Caco-2 (cell line): ENCODE measurements at regions of chr6 and their contacts with region 1.

Region 1: GRCh38 chr6:47477497-47478232 is at the start of gene CD2AP:
- DNase-seq: peak; percentile 92 to 95
- H3K4me3 ChIP-seq: peak within 1 kb of the TSS; percentile 78
- H3K4me3 Mint-ChIP-seq: peak within 1 kb of the TSS; percentile 97
- H3K27ac Mint-ChIP-seq: peak within 1 kb of the TSS; percentile 93
- H3K4me1 ChIP-seq: peaks cover 14% of the 10 kb centered on the region
- H3K4me1 Mint-ChIP-seq: peaks cover 28% of the 10 kb centered on the region
- H3K27me3 ChIP-seq: no peaks in the 10 kb centered on the region
- H3K27me3 Mint-ChIP-seq: no peaks in the 10 kb centered on the region
- CTCF ChIP-seq: peak in 1 of 2 experiments; percentile 26
- total RNA-seq, gene CD2AP: 65.3 and 69.3 TPM in 2 replicates

Region 2: DNA sequence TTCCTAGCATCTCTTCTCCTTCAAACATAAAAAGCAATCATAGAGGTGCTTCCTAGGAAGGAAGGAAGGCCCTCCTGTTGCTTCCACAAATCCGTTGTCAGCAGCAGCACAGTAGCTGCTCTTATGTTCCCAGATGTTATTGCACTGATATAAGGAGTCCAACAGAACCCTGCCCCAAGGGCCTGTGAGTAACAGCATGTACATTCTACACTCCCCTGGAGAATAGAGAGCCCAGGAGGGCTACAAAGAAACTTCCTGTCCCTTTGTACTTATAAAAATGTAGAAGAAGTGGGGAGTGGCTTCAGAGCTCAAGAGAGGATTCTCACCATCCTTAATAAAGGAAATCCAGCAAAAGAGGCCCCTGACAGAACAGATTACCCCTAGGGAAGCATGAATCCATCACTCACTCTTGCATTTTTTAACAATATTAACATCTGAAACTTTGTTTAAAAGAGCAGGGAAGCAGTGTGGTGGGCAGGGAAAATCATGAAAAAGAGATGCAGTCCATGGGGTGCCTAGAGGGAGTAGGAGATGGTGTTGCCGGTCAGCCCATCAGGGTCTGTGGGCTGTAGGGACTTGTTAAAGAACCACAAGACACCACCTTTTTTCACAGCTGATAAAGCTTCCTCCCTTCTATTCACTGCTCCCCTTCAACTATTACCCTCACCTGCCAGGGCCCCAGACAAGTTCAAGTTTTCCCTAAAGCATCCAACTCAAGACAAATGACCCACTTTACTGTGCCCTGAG is 331.1 kb before region 1 on chr6:
- CTCF ChIA-PET with region 1: no interaction called
- POLR2A ChIA-PET with region 1: interaction called, 16 read pairs
- intact Hi-C with region 1: no loop called
- DNase-seq: no peak
- H3K4me3 ChIP-seq: no peak overlapping the region
- H3K4me3 Mint-ChIP-seq: no peak overlapping the region
- H3K27ac Mint-ChIP-seq: peak overlapping the region; percentile 25
- H3K4me1 ChIP-seq: peaks cover 44% of the 10 kb centered on the region
- H3K4me1 Mint-ChIP-seq: peaks cover 19% of the 10 kb centered on the region
- H3K27me3 ChIP-seq: no peaks in the 10 kb centered on the region
- H3K27me3 Mint-ChIP-seq: no peaks in the 10 kb centered on the region
- CTCF ChIP-seq: no peak

Region 3: GRCh38 chr6:47434372-47435253 is 43.1 kb before region 1 on chr6:
- CTCF ChIA-PET with region 1: no interaction called
- POLR2A ChIA-PET with region 1: interaction called, 11 read pairs
- intact Hi-C with region 1: no loop called
- DNase-seq: peak in 1 of 2 experiments; percentile 18
- H3K4me3 ChIP-seq: no peak overlapping the region
- H3K4me3 Mint-ChIP-seq: no peak overlapping the region
- H3K27ac Mint-ChIP-seq: no peak overlapping the region
- H3K4me1 ChIP-seq: peaks cover 14% of the 10 kb centered on the region; the same call in 1 of the 2 replicates
- H3K4me1 Mint-ChIP-seq: peaks cover 7% of the 10 kb centered on the region
- H3K27me3 ChIP-seq: no peaks in the 10 kb centered on the region
- H3K27me3 Mint-ChIP-seq: no peaks in the 10 kb centered on the region
- CTCF ChIP-seq: no peak

Region 4: DNA sequence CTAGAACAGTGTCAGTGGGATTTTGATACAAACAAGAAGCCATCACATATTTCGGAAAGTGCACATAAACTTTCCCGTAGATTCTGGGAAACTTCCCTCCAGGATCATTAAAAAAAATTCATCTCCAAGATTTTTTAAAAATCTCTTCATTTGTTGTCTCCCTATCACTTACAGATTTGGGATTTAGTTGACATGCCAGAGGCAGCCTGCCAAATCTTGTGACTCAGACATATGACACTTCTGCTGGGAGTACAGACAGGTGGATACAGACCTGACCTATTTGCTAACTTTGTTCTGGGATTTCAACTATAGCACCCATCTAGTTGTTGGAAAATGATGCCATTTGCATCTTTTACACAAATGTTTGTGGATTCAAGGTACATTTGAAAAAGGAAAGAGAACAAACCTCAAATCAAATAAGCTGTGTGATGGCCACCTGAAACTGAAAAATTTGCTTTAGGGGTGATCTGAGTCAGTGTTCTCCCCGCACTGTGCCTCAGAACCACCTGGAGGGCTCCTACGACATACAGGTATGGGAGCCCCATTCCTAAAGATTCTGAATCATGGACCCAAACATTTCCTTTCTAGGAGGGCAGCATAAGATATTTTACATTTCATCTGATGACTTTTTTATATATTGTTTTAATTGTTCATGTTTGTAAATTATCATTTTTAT is 22.0 kb before region 1 on chr6:
- CTCF ChIA-PET with region 1: no interaction called
- POLR2A ChIA-PET with region 1: interaction called, 14 read pairs
- intact Hi-C with region 1: loop called (anchors 1 kb)
- DNase-seq: no peak
- H3K4me3 ChIP-seq: no peak overlapping the region
- H3K4me3 Mint-ChIP-seq: no peak overlapping the region
- H3K27ac Mint-ChIP-seq: no peak overlapping the region
- H3K4me1 ChIP-seq: peaks cover 19% of the 10 kb centered on the region
- H3K4me1 Mint-ChIP-seq: peaks cover 13% of the 10 kb centered on the region
- H3K27me3 ChIP-seq: no peaks in the 10 kb centered on the region
- H3K27me3 Mint-ChIP-seq: no peaks in the 10 kb centered on the region
- CTCF ChIP-seq: no peak